ENCODE measurements at regions of chr2 and their contacts with region 1.

Region 1: GRCh38 chr2:222024932-222025880 is 273.6 kb downstream of the PAX3 start:
- H3K4me3 ChIP-seq: no peak overlapping the region
- H3K27ac ChIP-seq: no peak overlapping the region
- H3K4me1 ChIP-seq: peaks cover 2% of the 10 kb centered on the region; the same call in 1 of the 2 replicates
- CTCF ChIP-seq: peak; percentile 34

Region 2: GRCh38 chr2:221997100-221997499 is 28.1 kb before region 1 on chr2:
- CTCF ChIA-PET with region 1: interaction called, 16 read pairs
- POLR2A ChIA-PET with region 1: no interaction called
- H3K4me3 ChIP-seq: no peak overlapping the region
- H3K27ac ChIP-seq: no peak overlapping the region
- H3K4me1 ChIP-seq: no peaks in the 10 kb centered on the region
- CTCF ChIP-seq: no peak

Region 3: DNA sequence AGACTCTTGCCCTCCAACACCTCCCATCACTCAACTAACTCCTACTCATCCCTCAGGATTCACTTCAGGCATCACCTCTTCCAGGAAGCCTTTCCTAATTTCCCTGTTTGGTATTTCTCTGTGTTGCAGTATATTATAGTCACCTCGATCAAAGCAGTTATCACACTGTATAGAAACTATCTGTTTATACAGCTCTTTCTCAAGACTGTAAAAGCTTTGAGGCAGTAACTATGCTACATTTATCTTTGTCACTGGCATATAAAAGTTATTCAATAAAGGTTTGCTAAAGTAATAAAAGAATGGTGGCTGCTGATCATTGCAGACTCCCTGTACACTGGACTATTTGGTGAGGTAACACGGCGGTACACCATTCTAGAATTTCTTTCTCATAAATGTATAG is 11.3 kb before region 1 on chr2:
- CTCF ChIA-PET with region 1: interaction called, 17 read pairs
- POLR2A ChIA-PET with region 1: no interaction called
- H3K4me3 ChIP-seq: no peak overlapping the region
- H3K27ac ChIP-seq: no peak overlapping the region
- H3K4me1 ChIP-seq: no peaks in the 10 kb centered on the region
- CTCF ChIP-seq: no peak

Region 4: DNA sequence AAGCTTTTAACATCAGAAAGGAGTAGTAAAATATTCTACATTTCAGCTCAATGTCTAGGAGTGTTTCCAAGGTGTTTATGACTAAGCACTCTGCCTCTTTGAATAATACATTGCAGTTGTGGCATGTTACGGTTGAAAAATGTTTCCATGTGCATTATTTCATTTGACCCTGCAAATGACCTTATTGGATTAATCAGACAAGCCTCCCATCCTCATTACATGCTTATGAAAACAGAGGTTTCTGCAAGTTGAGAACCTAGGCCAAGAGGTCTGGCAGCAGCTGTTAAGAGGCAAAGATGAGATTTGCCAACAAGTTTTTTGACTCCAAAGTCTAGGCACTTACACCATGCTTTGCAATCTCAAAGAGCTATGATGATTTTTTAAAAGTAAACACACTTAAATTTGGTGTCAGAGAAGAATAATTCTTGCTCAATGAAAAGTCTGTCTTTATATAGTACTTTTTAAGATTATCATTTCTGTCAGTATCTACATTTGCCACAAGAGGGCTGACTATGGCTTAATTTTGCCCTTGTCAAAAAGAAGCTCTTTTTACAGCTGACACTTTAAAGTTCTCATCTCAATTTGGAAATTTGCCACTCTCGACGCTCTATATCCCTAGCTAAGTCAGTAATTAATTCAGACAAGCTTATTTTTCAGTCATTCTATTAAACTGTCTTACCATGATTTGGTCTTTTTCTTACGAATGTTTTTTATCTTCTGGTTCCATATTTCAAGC is 13.0 kb after region 1 on chr2:
- CTCF ChIA-PET with region 1: interaction called, 38 read pairs
- POLR2A ChIA-PET with region 1: no interaction called
- H3K4me3 ChIP-seq: no peak overlapping the region
- H3K27ac ChIP-seq: no peak overlapping the region
- H3K4me1 ChIP-seq: peaks cover 4% of the 10 kb centered on the region
- CTCF ChIP-seq: no peak

Region 5: GRCh38 chr2:222049946-222050345 is 24.7 kb after region 1 on chr2:
- CTCF ChIA-PET with region 1: interaction called, 24 read pairs
- POLR2A ChIA-PET with region 1: no interaction called
- H3K4me3 ChIP-seq: no peak overlapping the region
- H3K27ac ChIP-seq: no peak overlapping the region
- H3K4me1 ChIP-seq: peaks cover 5% of the 10 kb centered on the region; the same call in 1 of the 2 replicates
- CTCF ChIP-seq: no peak

Region 6: DNA sequence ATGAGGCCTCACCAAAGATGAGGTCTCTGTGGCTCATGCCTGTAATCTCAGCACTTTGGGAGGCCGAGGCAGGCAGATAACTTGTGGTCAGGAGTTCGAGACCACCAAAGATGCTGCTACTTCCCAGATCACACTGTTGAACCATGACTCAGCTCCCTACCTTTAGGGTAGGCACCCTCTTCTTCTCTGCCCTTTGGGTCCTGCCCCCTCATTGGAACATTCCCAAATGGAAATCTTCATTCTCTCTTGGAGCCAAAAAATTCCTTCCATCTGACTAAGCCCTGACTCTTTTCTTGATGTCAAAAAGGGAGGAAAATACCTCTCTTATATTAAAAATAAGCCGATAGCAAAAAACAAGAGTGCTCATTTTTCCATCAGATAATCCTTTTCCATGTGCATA is 90.1 kb after region 1 on chr2:
- CTCF ChIA-PET with region 1: no interaction called
- POLR2A ChIA-PET with region 1: no interaction called
- H3K4me3 ChIP-seq: no peak overlapping the region
- H3K27ac ChIP-seq: no peak overlapping the region
- H3K4me1 ChIP-seq: no peaks in the 10 kb centered on the region
- CTCF ChIP-seq: no peak

Region 7: GRCh38 chr2:222561817-222562645 is 536.8 kb after region 1 on chr2:
- CTCF ChIA-PET with region 1: interaction called, 22 read pairs
- POLR2A ChIA-PET with region 1: interaction called, 3 read pairs
- H3K4me3 ChIP-seq: no peak overlapping the region
- H3K27ac ChIP-seq: no peak overlapping the region
- H3K4me1 ChIP-seq: no peaks in the 10 kb centered on the region
- CTCF ChIP-seq: no peak

Measured in HEK293 (cell line).